Heart left ventricle (tissue), 16 donors: ENCODE measurements at regions of chr15 and their contacts with region 1.

Region 1: DNA sequence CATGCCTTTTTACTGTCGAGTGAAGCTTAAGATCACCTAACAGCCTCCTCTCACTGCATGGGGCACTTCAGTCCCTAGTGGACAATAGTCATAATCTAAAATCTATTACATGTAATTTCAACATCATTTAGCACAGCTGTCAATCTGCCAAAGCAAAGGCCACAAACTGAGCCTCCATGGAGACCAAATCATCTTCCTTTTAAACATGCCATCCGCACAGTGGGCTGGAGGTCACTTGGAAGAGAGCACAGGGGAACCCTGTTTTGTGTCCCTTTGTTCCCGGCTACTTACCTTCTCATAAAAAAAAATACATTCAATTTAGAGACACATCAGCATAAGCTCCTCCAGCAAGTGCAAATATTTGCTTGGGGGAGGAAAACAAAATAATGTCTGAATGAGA is 167.3 kb downstream of the SQOR start:
- DNase-seq: no peak
- ATAC-seq: no peak
- H3K4me3 ChIP-seq: no peak overlapping the region
- H3K27ac ChIP-seq: no peak overlapping the region
- H3K4me1 ChIP-seq: no peaks in the 10 kb centered on the region
- H3K27me3 ChIP-seq: no peaks in the 10 kb centered on the region
- CTCF ChIP-seq: no peak
- POLR2A ChIP-seq: no peak

Region 2: DNA sequence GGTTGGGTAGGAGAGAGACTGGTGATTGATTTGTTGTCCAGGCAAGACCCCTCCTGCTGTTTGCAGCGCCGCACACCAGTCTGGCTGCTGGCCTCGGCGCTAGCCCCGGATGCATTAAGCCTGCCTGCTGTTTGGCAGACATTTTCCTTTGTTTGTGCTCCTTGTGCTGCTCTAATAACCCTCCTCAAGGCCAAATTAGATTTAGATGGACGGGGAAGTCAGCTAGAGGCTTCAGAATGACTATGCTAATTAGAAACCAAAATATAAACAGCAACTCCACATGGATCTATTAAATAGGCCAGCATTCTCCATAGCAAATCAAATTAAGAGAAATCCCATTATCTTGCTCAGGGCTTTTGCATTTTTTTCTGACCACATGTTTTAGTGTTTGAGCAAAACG is 277.9 kb after region 1 on chr15:
- intact Hi-C with region 1: loop called in 4 of 10 experiments (anchors 5 to 10 kb)
- DNase-seq: peak in 1 of 5 donors; percentile 62
- ATAC-seq: peak in 1 of 4 donors; percentile 44
- H3K4me3 ChIP-seq: no peak overlapping the region
- H3K27ac ChIP-seq: peak overlapping the region in 1 of 12 donors; percentile 16
- H3K4me1 ChIP-seq: peaks cover 0 to 13% (median 2%) of the 10 kb centered on the region in 12 donors
- H3K27me3 ChIP-seq: no peaks in the 10 kb centered on the region
- CTCF ChIP-seq: no peak
- POLR2A ChIP-seq: no peak